ENCODE measurements at regions of chr6 and their contacts with region 1.

Region 1: GRCh38 chr6:47631269-47631772 is 67.1 kb upstream of the ADGRF4 start:
- DNase-seq: peak in 3 of 14 experiments; percentile 53 to 58 (median 56)
- ATAC-seq: peak; percentile 44
- H3K4me3 ChIP-seq: no peak overlapping the region
- H3K4me3 Mint-ChIP-seq: no peak overlapping the region
- H3K27ac ChIP-seq: no peak overlapping the region
- H3K27ac Mint-ChIP-seq: peak overlapping the region; percentile 6
- H3K4me1 ChIP-seq: peaks cover 9% of the 10 kb centered on the region
- H3K4me1 Mint-ChIP-seq: peaks cover 24% of the 10 kb centered on the region
- H3K27me3 ChIP-seq: no peaks in the 10 kb centered on the region
- H3K27me3 Mint-ChIP-seq: no peaks in the 10 kb centered on the region
- CTCF ChIP-seq: peak; percentile 70

Region 2: DNA sequence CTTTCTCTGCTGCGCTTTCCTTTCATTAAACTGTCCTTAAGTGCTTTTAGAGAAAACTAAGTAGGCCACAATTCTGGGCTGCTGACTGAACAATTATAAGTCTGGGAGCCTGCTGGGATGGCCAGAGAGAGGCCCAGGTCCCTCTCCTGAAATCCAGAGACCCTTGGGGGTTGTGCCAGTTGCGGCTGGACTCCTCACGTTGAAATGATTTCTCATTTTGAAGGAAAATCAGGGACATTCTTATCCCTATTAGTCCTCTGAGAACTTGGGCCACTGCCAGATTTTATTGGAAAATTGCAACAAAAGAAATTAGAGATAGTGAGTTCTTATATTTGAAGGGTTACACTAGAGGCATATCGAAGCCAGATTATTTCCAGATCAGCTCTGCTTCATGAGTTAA is 1760.8 kb before region 1 on chr6:
- CTCF ChIA-PET with region 1: no interaction called
- POLR2A ChIA-PET with region 1: no interaction called
- intact Hi-C with region 1: no loop called
- DNase-seq: no peak
- ATAC-seq: no peak
- H3K4me3 ChIP-seq: no peak overlapping the region
- H3K4me3 Mint-ChIP-seq: no peak overlapping the region
- H3K27ac ChIP-seq: no peak overlapping the region
- H3K27ac Mint-ChIP-seq: no peak overlapping the region
- H3K4me1 ChIP-seq: no peaks in the 10 kb centered on the region
- H3K4me1 Mint-ChIP-seq: no peaks in the 10 kb centered on the region
- H3K27me3 ChIP-seq: no peaks in the 10 kb centered on the region
- H3K27me3 Mint-ChIP-seq: no peaks in the 10 kb centered on the region
- CTCF ChIP-seq: no peak

Region 3: GRCh38 chr6:47733879-47734558 is 102.7 kb after region 1 on chr6:
- CTCF ChIA-PET with region 1: interaction called, 7 read pairs
- POLR2A ChIA-PET with region 1: no interaction called
- intact Hi-C with region 1: loop called (anchors 1 to 5 kb)
- DNase-seq: peak in 3 of 14 experiments; percentile 20 to 26 (median 24)
- ATAC-seq: no peak
- H3K4me3 ChIP-seq: no peak overlapping the region
- H3K4me3 Mint-ChIP-seq: no peak overlapping the region
- H3K27ac ChIP-seq: no peak overlapping the region
- H3K27ac Mint-ChIP-seq: no peak overlapping the region
- H3K4me1 ChIP-seq: no peaks in the 10 kb centered on the region
- H3K4me1 Mint-ChIP-seq: no peaks in the 10 kb centered on the region
- H3K27me3 ChIP-seq: no peaks in the 10 kb centered on the region
- H3K27me3 Mint-ChIP-seq: no peaks in the 10 kb centered on the region
- CTCF ChIP-seq: no peak

Region 4: DNA sequence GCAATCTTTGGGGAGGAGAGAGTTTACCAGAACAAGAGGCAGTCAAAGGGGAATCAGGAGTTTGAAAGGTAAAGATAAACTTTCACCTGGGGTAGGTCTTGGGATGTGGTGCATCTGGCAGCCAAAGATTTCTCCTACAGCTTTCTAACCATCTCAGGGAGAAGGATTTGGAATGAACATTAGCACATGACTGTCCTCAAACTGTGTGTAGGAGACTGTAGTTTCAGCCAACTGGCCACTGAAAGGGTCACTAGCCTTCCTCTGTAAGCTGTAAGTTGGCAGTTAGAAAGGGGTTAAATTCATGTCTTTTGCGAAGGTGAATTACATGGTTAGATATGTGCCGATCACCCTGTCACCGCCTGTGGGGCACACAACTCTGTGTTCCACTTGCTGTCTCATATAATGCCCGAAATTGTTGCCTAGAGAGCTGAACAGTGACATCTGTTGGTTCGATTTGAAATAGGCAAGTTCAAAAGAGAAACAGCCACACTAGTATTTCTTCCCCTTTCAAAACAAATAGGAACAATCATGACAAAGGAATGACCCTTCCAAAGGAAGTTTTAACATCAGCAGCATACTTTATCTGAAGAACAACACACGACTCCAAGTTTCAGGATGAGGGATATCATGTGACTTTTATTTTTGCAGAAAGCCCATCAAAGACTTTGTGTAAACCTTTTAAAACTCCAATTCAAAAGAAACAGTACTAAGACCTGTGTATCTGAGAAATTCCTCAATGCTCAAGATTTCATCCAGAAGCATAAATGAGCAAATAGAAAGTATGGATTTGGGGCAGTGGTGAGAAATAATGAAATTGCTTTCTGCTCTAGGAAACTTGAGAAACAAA is 149.4 kb after region 1 on chr6:
- CTCF ChIA-PET with region 1: interaction called, 3 read pairs
- POLR2A ChIA-PET with region 1: interaction called, 4 read pairs
- intact Hi-C with region 1: loop called (anchors 1 to 2 kb)
- DNase-seq: peak in 8 of 14 experiments; percentile 7 to 63 (median 30)
- ATAC-seq: peak; percentile 77
- H3K4me3 ChIP-seq: no peak overlapping the region
- H3K4me3 Mint-ChIP-seq: no peak overlapping the region
- H3K27ac ChIP-seq: no peak overlapping the region
- H3K27ac Mint-ChIP-seq: no peak overlapping the region
- H3K4me1 ChIP-seq: peaks cover 3% of the 10 kb centered on the region
- H3K4me1 Mint-ChIP-seq: peaks cover 5% of the 10 kb centered on the region
- H3K27me3 ChIP-seq: no peaks in the 10 kb centered on the region
- H3K27me3 Mint-ChIP-seq: peaks cover 5% of the 10 kb centered on the region
- CTCF ChIP-seq: peak; percentile 42

Region 5: DNA sequence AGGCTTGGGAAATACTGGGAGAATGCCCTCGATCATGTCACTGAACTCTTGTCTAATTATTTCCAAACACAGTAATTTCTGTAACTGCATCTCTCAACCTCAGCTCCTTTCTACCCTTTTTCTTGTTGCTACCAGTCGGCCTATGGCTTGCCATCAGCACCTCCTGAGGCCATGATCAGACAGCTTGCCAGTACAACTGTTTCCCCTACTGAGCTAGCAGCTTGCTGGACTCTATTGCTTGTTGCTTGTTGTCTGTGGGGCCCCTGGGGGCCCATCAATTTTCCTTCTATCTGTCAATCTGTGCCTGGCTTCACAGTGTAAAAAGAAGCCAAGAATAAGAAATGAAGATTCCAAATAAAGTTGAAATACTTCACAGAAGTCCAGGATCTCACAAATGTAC is 274.4 kb after region 1 on chr6:
- CTCF ChIA-PET with region 1: no interaction called
- POLR2A ChIA-PET with region 1: no interaction called
- intact Hi-C with region 1: no loop called
- DNase-seq: no peak
- ATAC-seq: no peak
- H3K4me3 ChIP-seq: no peak overlapping the region
- H3K4me3 Mint-ChIP-seq: no peak overlapping the region
- H3K27ac ChIP-seq: no peak overlapping the region
- H3K27ac Mint-ChIP-seq: no peak overlapping the region
- H3K4me1 ChIP-seq: no peaks in the 10 kb centered on the region
- H3K4me1 Mint-ChIP-seq: no peaks in the 10 kb centered on the region
- H3K27me3 ChIP-seq: no peaks in the 10 kb centered on the region
- H3K27me3 Mint-ChIP-seq: no peaks in the 10 kb centered on the region
- CTCF ChIP-seq: no peak

Region 6: GRCh38 chr6:49409951-49410542 is 1778.7 kb after region 1 on chr6:
- CTCF ChIA-PET with region 1: interaction called, 6 read pairs
- POLR2A ChIA-PET with region 1: no interaction called
- intact Hi-C with region 1: loop called in 1 of 2 experiments (anchors 5 kb)
- DNase-seq: peak; percentile 7 to 67 (median 42)
- ATAC-seq: peak; percentile 71
- H3K4me3 ChIP-seq: no peak overlapping the region
- H3K4me3 Mint-ChIP-seq: no peak overlapping the region
- H3K27ac ChIP-seq: no peak overlapping the region
- H3K27ac Mint-ChIP-seq: no peak overlapping the region
- H3K4me1 ChIP-seq: no peaks in the 10 kb centered on the region
- H3K4me1 Mint-ChIP-seq: no peaks in the 10 kb centered on the region
- H3K27me3 ChIP-seq: no peaks in the 10 kb centered on the region
- H3K27me3 Mint-ChIP-seq: peaks cover 13% of the 10 kb centered on the region
- CTCF ChIP-seq: peak; percentile 95